MCF 10A (cell line): ENCODE measurements at regions of chr12 and their contacts with region 1.

Region 1: GRCh38 chr12:104201238-104202001 is 14.2 kb upstream of the TXNRD1 start:
- DNase-seq: peak; percentile 74
- H3K4me3 Mint-ChIP-seq: no peak overlapping the region
- H3K27ac Mint-ChIP-seq: no peak overlapping the region
- H3K4me1 Mint-ChIP-seq: peaks cover 18% of the 10 kb centered on the region
- H3K27me3 Mint-ChIP-seq: no peaks in the 10 kb centered on the region
- CTCF ChIP-seq: peak; percentile 86

Region 2: GRCh38 chr12:103751171-103751570 is 450.2 kb before region 1 on chr12:
- CTCF ChIA-PET with region 1: no interaction called
- POLR2A ChIA-PET with region 1: no interaction called
- intact Hi-C with region 1: no loop called
- DNase-seq: no peak
- H3K4me3 Mint-ChIP-seq: no peak overlapping the region
- H3K27ac Mint-ChIP-seq: no peak overlapping the region
- H3K4me1 Mint-ChIP-seq: no peaks in the 10 kb centered on the region
- H3K27me3 Mint-ChIP-seq: no peaks in the 10 kb centered on the region
- CTCF ChIP-seq: no peak

Region 3: DNA sequence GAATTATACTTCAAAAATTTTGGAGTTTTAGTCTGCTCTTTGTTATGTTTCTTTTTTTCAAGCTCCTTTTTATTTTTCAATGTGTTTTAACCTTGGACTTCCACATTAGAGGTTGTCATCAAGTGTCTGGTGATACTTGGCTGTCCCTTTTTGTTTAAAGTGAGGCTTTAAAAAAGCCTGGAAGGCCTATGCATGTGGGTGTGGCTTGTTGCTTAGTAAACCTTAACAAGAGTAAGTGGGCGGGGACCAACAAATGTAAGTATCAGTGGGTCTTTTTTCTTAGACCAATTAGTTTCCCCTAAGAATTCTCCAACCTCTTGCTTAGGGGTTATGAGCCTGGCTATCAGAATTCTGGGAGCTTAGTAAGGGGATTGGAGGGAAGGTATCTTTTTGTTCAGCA is 110.7 kb before region 1 on chr12:
- CTCF ChIA-PET with region 1: no interaction called
- POLR2A ChIA-PET with region 1: no interaction called
- intact Hi-C with region 1: no loop called
- DNase-seq: no peak
- H3K4me3 Mint-ChIP-seq: no peak overlapping the region
- H3K27ac Mint-ChIP-seq: peak overlapping the region; percentile 31
- H3K4me1 Mint-ChIP-seq: no peaks in the 10 kb centered on the region
- H3K27me3 Mint-ChIP-seq: no peaks in the 10 kb centered on the region
- CTCF ChIP-seq: no peak

Region 4: GRCh38 chr12:104294845-104295688 is 93.6 kb after region 1 on chr12:
- CTCF ChIA-PET with region 1: interaction called, 25 read pairs
- POLR2A ChIA-PET with region 1: interaction called, 58 read pairs
- intact Hi-C with region 1: no loop called
- DNase-seq: no peak
- H3K4me3 Mint-ChIP-seq: no peak overlapping the region
- H3K27ac Mint-ChIP-seq: peak overlapping the region; percentile 85
- H3K4me1 Mint-ChIP-seq: peaks cover 31% of the 10 kb centered on the region
- H3K27me3 Mint-ChIP-seq: no peaks in the 10 kb centered on the region
- CTCF ChIP-seq: no peak

Region 5: GRCh38 chr12:104314242-104314614 is 112.8 kb after region 1 on chr12:
- CTCF ChIA-PET with region 1: interaction called, 10 read pairs
- POLR2A ChIA-PET with region 1: no interaction called
- intact Hi-C with region 1: no loop called
- DNase-seq: no peak
- H3K4me3 Mint-ChIP-seq: no peak overlapping the region
- H3K27ac Mint-ChIP-seq: no peak overlapping the region
- H3K4me1 Mint-ChIP-seq: peaks cover 7% of the 10 kb centered on the region
- H3K27me3 Mint-ChIP-seq: no peaks in the 10 kb centered on the region
- CTCF ChIP-seq: no peak

Region 6: DNA sequence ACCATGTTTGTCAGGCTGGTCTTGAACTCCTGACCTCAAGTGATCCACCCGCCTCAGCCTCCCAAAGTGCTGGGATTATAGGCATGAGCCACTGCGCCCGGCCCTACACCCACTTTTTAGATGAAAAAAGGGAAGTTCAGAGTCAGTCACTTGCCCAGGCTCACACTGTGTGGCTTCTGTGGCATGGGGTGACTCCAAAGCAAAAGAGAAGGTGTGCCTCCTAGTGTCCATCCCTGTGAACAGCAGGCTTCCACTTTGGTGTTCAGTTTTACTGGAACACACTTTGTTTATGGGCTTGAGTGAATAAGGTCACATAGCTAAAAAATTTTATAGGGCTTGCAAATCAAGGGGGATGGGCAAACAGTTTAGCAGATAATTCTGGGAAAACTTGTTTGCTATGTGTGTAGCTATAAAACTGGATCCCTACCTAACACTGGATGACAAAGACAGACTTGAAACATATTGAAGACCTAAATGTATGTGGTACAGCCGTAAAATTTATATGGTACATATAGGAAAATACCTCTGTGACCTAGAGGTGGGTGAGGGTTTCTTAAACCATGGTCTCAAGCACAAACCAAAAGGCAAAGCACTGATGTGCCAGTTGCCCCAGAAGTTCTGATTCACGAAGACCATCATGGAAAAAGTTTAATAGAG is 157.1 kb after region 1 on chr12:
- CTCF ChIA-PET with region 1: interaction called, 28 read pairs
- POLR2A ChIA-PET with region 1: no interaction called
- intact Hi-C with region 1: loop called (anchors 1 kb)
- DNase-seq: peak; percentile 64
- H3K4me3 Mint-ChIP-seq: no peak overlapping the region
- H3K27ac Mint-ChIP-seq: no peak overlapping the region
- H3K4me1 Mint-ChIP-seq: peaks cover 4% of the 10 kb centered on the region
- H3K27me3 Mint-ChIP-seq: no peaks in the 10 kb centered on the region
- CTCF ChIP-seq: peak; percentile 68

Region 7: GRCh38 chr12:104877123-104877705 is 675.8 kb after region 1 on chr12:
- CTCF ChIA-PET with region 1: interaction called, 3 read pairs
- POLR2A ChIA-PET with region 1: no interaction called
- intact Hi-C with region 1: loop called (anchors 1 kb)
- DNase-seq: peak; percentile 40
- H3K4me3 Mint-ChIP-seq: no peak overlapping the region
- H3K27ac Mint-ChIP-seq: no peak overlapping the region
- H3K4me1 Mint-ChIP-seq: no peaks in the 10 kb centered on the region
- H3K27me3 Mint-ChIP-seq: no peaks in the 10 kb centered on the region
- CTCF ChIP-seq: peak; percentile 54

Region 8: GRCh38 chr12:105100998-105101397 is 899.6 kb after region 1 on chr12:
- CTCF ChIA-PET with region 1: no interaction called
- POLR2A ChIA-PET with region 1: no interaction called
- intact Hi-C with region 1: loop called (anchors 2 kb)
- DNase-seq: no peak
- H3K4me3 Mint-ChIP-seq: no peak overlapping the region
- H3K27ac Mint-ChIP-seq: peak overlapping the region; percentile 85
- H3K4me1 Mint-ChIP-seq: peaks cover 12% of the 10 kb centered on the region
- H3K27me3 Mint-ChIP-seq: no peaks in the 10 kb centered on the region
- CTCF ChIP-seq: peak; percentile 24